ENCODE measurements at regions of chr19 and their contacts with region 1.

Region 1: GRCh38 chr19:3324321-3324856 is 42.0 kb upstream of the NFIC start:
- DNase-seq: peak; percentile 36 to 83 (median 58)
- ATAC-seq: peak; percentile 75
- H3K4me3 ChIP-seq: no peak overlapping the region
- H3K4me3 Mint-ChIP-seq: no peak overlapping the region
- H3K27ac ChIP-seq: no peak overlapping the region
- H3K27ac Mint-ChIP-seq: no peak overlapping the region
- H3K4me1 ChIP-seq: no peaks in the 10 kb centered on the region
- H3K4me1 Mint-ChIP-seq: peaks cover 0 to 8% (median 0%) of the 10 kb centered on the region in 7 donors
- H3K27me3 ChIP-seq: no peaks in the 10 kb centered on the region
- H3K27me3 Mint-ChIP-seq: peaks cover 2 to 28% (median 20%) of the 10 kb centered on the region in 5 donors

Region 2: DNA sequence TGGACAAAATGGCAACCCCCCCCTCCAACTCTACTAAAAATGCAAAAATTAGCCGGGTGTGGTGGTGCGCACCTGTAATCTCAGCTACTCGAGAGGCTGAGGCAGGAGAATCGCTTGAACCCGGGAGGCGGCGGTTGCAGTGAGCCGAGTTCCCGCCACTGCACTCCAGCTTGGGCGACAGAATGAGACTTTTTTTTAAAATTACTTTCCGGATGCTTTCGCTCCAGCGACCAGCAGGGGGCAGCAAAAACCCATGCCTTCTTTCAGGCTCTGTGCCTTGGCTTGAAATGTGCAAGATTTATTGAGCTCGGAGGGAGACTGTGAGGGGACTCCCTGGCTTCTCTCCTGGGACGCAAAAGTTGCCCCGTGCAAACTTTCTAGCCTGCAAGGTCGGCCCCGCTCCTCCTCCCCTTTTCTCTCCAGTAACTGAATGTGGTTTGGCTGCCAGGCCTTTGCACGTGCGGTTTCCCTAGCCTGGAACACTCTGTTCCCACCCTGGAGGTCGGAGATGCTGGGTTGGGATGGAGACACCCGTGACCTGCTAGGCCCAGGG is 19.4 kb before region 1 on chr19:
- CTCF ChIA-PET with region 1: no interaction called
- POLR2A ChIA-PET with region 1: no interaction called
- intact Hi-C with region 1: loop called in 1 of 2 experiments (anchors 2 kb)
- DNase-seq: peak; percentile 57 to 80 (median 74)
- ATAC-seq: peak; percentile 76
- H3K4me3 ChIP-seq: no peak overlapping the region
- H3K4me3 Mint-ChIP-seq: peak overlapping the region in 1 of 10 donors; percentile 13
- H3K27ac ChIP-seq: no peak overlapping the region
- H3K27ac Mint-ChIP-seq: no peak overlapping the region
- H3K4me1 ChIP-seq: no peaks in the 10 kb centered on the region
- H3K4me1 Mint-ChIP-seq: peaks cover 0 to 5% (median 2%) of the 10 kb centered on the region in 7 donors
- H3K27me3 ChIP-seq: no peaks in the 10 kb centered on the region
- H3K27me3 Mint-ChIP-seq: peaks cover 5 to 26% (median 20%) of the 10 kb centered on the region in 5 donors

Region 3: DNA sequence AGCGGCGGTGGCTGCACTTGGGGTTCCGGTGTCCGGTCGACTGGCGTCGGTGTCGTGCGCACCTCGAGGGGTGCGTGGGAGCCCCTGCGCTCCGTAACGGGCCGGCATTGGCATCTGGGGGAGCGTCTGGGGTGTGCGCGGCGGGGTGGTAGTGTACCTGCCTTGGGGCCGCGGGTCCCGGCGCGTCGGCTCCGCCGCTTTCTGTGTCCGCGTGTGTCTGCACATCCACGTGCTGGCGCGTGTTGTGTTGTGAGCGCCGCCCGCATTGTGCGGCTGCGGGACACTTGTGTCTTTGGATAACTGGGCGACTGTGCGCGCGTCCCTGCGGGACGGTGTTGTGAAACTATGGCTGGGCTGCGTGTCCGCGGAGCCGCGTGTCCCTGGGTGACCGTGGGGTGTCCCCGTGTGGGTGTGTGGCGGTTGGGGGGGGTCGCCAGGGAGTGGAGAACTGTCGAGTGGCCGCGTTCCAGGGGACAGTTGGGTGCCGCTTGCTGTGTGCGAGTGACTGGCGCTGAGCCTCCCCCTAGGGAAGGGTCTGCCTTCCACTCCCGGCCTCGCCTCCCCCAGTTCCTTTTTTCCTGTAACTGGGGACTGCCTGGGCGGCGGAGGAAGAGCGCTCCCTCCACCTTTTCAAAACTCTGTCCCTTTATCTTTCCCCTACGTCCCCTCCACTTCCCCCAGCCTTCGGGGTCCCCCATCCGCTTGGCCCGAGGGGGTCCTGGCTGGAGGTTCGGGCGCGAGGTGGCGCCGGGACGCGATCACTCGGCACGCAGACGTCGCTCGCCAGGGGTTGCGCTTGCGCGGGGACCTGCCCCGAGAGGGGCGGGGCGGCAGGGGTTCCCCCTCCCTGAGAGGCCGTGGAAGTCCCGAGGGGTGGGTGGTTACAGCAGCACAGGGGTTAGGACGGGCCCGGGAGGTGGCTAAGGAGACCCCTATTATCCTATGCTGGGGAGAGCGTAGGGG is 36.3 kb after region 1 on chr19:
- CTCF ChIA-PET with region 1: no interaction called
- POLR2A ChIA-PET with region 1: no interaction called
- intact Hi-C with region 1: loop called in 1 of 2 experiments (anchors 1 kb)
- DNase-seq: peak; percentile 60 to 80 (median 71)
- ATAC-seq: peak; percentile 70
- H3K4me3 ChIP-seq: peak overlapping the region; percentile 62
- H3K4me3 Mint-ChIP-seq: peak overlapping the region; percentile 85 to 97 (median 90)
- H3K27ac ChIP-seq: peak overlapping the region; percentile 69
- H3K27ac Mint-ChIP-seq: peak overlapping the region; percentile 54 to 91 (median 84)
- H3K4me1 ChIP-seq: peaks cover 16 to 18% of the 10 kb centered on the region in 2 donors
- H3K4me1 Mint-ChIP-seq: peaks cover 25 to 49% (median 41%) of the 10 kb centered on the region in 7 donors
- H3K27me3 ChIP-seq: no peaks in the 10 kb centered on the region
- H3K27me3 Mint-ChIP-seq: peaks cover 0 to 67% (median 0%) of the 10 kb centered on the region in 5 donors

Region 4: DNA sequence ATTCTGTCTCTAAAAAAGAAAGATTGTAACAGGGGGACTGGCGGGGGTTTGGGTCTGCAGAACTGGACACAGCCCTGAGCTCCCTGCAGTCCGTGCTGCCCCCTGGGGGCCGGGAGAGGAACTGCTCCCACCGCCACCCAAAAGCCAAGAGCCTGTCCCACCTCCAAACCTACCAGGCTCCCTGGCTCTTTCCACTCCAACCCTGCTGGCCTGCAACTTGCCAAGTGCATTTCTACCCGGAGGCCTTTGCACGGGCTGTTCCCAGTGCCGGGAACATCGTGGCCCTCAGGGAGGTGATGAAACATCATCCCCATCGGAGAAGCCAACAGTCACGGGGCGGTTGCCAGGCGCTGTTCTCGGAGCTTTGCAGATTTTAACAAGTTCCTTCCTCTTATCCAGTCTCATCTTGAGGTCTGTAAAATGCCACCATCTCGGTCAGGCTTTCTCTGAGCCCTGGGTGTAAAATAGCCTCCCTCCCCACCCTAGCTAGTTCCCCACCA is 105.2 kb after region 1 on chr19:
- CTCF ChIA-PET with region 1: interaction called, 24 read pairs
- POLR2A ChIA-PET with region 1: interaction called, 6 read pairs
- intact Hi-C with region 1: loop called (anchors 1 kb)
- DNase-seq: peak; percentile 60 to 88 (median 74)
- ATAC-seq: peak; percentile 92
- H3K4me3 ChIP-seq: no peak overlapping the region
- H3K4me3 Mint-ChIP-seq: no peak overlapping the region
- H3K27ac ChIP-seq: no peak overlapping the region
- H3K27ac Mint-ChIP-seq: no peak overlapping the region
- H3K4me1 ChIP-seq: peaks cover 4% of the 10 kb centered on the region in 2 donors
- H3K4me1 Mint-ChIP-seq: peaks cover 4 to 11% (median 6%) of the 10 kb centered on the region in 7 donors
- H3K27me3 ChIP-seq: no peaks in the 10 kb centered on the region
- H3K27me3 Mint-ChIP-seq: no peaks in the 10 kb centered on the region

Region 5: DNA sequence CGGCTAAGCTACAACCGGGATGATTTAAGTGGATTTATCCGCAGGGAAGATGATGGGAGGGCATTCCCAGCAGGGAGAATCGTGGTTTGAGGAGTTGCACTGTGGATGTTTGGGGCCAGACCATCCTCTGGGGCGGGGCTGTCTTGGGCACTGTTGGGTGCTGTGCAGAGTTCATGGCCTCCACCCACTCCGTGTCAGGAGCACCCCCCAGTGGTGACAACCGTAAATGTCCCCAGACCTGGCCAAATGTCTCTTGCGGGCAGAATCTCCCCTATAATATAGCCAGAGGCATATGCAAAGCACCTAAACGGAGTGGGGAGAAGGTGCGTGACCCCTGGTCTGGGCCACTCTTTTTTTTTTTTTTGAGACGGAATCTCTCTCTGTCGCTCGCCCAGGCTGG is 115.7 kb after region 1 on chr19:
- CTCF ChIA-PET with region 1: interaction called, 8 read pairs
- POLR2A ChIA-PET with region 1: no interaction called
- intact Hi-C with region 1: loop called in 1 of 2 experiments (anchors 1 kb)
- DNase-seq: peak; percentile 29 to 58 (median 36)
- ATAC-seq: peak; percentile 70
- H3K4me3 ChIP-seq: no peak overlapping the region
- H3K4me3 Mint-ChIP-seq: no peak overlapping the region
- H3K27ac ChIP-seq: no peak overlapping the region
- H3K27ac Mint-ChIP-seq: no peak overlapping the region
- H3K4me1 ChIP-seq: peaks cover 4 to 5% of the 10 kb centered on the region in 2 donors
- H3K4me1 Mint-ChIP-seq: peaks cover 5 to 20% (median 11%) of the 10 kb centered on the region in 7 donors
- H3K27me3 ChIP-seq: no peaks in the 10 kb centered on the region
- H3K27me3 Mint-ChIP-seq: no peaks in the 10 kb centered on the region

Region 6: DNA sequence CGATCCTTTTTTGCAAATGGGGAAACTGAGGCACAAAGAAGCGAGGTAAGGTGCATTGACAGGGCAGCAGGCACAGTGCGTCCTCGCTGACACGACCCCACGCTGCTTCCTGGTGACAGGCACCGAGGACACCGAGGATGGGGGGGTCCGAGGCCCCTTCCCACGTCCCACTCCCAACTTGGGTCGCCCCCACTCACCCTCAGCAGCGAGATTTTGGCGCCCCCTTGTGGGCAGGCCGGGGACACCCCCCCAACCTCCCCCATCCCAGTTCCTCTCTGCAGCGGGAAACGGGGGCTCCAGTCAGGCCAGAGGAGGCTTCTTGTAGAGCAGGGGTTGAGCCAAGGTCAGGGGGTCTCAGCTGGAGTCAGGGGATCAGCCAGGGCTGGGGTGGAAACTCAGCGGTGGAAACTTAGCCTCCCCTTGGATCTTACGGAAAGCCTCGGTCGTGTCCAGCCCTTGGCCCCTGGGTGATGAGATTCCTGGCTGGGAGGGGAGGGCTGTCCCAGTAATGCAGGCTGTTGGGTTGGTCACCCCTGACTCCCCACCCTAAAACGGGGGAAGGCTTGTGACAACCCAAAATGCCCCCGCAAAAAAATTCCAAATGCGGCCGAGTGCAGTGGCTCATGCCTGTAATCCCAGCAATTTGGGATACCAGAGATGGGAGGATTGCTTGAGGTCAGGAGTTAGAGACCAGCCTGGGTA is 147.7 kb after region 1 on chr19:
- CTCF ChIA-PET with region 1: interaction called, 7 read pairs
- POLR2A ChIA-PET with region 1: interaction called, 3 read pairs
- intact Hi-C with region 1: loop called (anchors 1 kb)
- DNase-seq: peak in 3 of 9 donors; percentile 35 to 57 (median 44)
- ATAC-seq: peak; percentile 36
- H3K4me3 ChIP-seq: no peak overlapping the region
- H3K4me3 Mint-ChIP-seq: no peak overlapping the region
- H3K27ac ChIP-seq: no peak overlapping the region
- H3K27ac Mint-ChIP-seq: no peak overlapping the region
- H3K4me1 ChIP-seq: no peaks in the 10 kb centered on the region
- H3K4me1 Mint-ChIP-seq: peaks cover 0 to 7% (median 0%) of the 10 kb centered on the region in 7 donors
- H3K27me3 ChIP-seq: no peaks in the 10 kb centered on the region
- H3K27me3 Mint-ChIP-seq: no peaks in the 10 kb centered on the region

Region 7: GRCh38 chr19:4108767-4109625 is 784.6 kb after region 1 on chr19:
- CTCF ChIA-PET with region 1: no interaction called
- POLR2A ChIA-PET with region 1: no interaction called
- intact Hi-C with region 1: no loop called
- DNase-seq: peak; percentile 35 to 83 (median 79)
- ATAC-seq: peak; percentile 67
- H3K4me3 ChIP-seq: peak overlapping the region; percentile 11
- H3K4me3 Mint-ChIP-seq: peak overlapping the region; percentile 54 to 80 (median 74)
- H3K27ac ChIP-seq: peak overlapping the region; percentile 72
- H3K27ac Mint-ChIP-seq: peak overlapping the region; percentile 86 to 97 (median 94)
- H3K4me1 ChIP-seq: peaks cover 44 to 53% of the 10 kb centered on the region in 2 donors
- H3K4me1 Mint-ChIP-seq: peaks cover 34 to 85% (median 55%) of the 10 kb centered on the region in 7 donors
- H3K27me3 ChIP-seq: no peaks in the 10 kb centered on the region
- H3K27me3 Mint-ChIP-seq: no peaks in the 10 kb centered on the region

Measured in naive thymus-derived CD4-positive, alpha-beta T cell (primary cell).